Left cardiac atrium (tissue), 4 donors: ENCODE measurements at regions of chr3 and their contacts with region 1.

Region 1: GRCh38 chr3:87167628-87168456 is 59.3 kb upstream of the CHMP2B start:
- DNase-seq: no peak
- ATAC-seq: peak; percentile 17 to 27

Region 2: DNA sequence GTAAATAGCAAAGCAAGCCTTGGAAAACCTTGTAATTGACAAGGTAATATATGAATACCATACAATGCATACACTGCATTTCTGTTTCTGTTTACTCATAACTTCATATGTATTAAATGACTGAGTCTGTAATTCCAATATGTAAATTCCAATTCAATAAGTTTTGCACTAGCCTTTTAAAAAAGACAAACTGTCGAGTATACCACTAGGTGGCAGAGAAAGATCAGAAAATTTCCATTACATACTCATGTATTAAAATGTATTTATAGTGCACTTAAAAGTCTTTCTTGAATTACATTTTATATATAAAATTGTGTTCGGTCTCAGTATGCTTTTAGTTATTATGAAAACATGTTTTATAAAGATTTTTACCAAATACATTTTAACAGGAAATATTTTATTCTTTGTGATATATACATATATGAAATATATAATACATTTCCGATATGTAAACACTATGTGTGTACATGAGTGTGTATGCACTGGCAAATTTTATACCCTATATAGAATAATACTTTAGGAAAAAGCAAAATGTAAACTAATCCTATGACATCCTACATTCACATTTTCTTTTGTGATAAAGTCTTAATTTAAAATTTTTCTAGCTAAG is 393.7 kb before region 1 on chr3:
- intact Hi-C with region 1: loop called (anchors 2 to 5 kb)
- DNase-seq: no peak
- ATAC-seq: no peak

Region 3: GRCh38 chr3:86890741-86891396 is 277.0 kb before region 1 on chr3:
- intact Hi-C with region 1: no loop called
- DNase-seq: no peak
- ATAC-seq: no peak